ENCODE measurements at regions of chr1 and their contacts with region 1.

Region 1: DNA sequence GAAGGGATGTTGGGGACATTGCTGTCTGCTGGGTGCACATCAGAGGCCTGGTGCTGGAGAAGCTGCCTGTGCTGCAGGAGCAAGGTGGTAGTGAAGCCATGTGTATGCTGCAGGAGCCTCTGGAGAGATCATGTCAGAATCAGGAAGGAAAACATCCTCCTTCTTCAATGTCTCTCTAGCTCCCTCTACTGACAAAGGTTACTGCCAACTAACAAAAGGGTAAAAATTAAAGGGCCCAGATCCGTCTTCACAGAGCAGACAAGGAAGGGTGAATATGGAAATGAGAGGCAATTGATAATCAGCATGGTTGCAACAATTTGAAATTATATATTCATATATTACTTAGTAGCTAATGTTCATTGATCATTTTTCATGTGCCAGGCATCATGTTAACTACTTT is 32.2 kb downstream of the FAM177B start:
- DNase-seq: no peak
- H3K4me3 ChIP-seq: no peak overlapping the region
- H3K27ac ChIP-seq: no peak overlapping the region
- H3K4me1 ChIP-seq: no peaks in the 10 kb centered on the region
- H3K27me3 ChIP-seq: no peaks in the 10 kb centered on the region
- CTCF ChIP-seq: peak in 1 of 3 experiments; percentile 40; a peak in 1 of 4 replicates
- EP300 ChIP-seq: no peak
- POLR2A ChIP-seq: no peak
- RAD21 ChIP-seq: peak; percentile 35 to 38

Region 2: DNA sequence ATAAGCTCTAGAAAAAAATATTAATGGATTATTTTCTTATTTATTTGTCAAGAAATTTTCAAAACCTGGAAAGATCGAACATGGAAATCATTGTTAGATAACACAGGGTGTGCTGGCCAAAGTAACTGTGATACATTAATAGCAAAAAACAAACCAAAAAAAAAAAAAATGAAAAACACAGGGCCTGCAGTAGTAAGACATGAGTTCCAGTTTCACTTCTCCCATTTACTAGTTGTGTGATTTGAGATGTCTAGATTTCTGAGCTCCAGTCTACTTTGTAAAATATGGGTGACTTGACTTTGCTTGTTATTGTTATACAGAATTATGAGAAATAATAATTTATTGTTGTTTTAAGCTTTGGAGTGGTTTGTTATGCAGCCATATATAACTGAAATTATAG is 18.5 kb before region 1 on chr1:
- CTCF ChIA-PET with region 1: interaction called, 17 read pairs
- POLR2A ChIA-PET with region 1: no interaction called
- DNase-seq: no peak
- H3K4me3 ChIP-seq: no peak overlapping the region
- H3K27ac ChIP-seq: no peak overlapping the region
- H3K4me1 ChIP-seq: no peaks in the 10 kb centered on the region
- H3K27me3 ChIP-seq: no peaks in the 10 kb centered on the region
- CTCF ChIP-seq: no peak
- EP300 ChIP-seq: no peak
- POLR2A ChIP-seq: no peak
- RAD21 ChIP-seq: no peak